MCF 10A (cell line): ENCODE measurements at regions of chr6 and their contacts with region 1.

Region 1: GRCh38 chr6:31068669-31069340 is 43.6 kb downstream of the C6orf15 start:
- DNase-seq: peak; percentile 82
- H3K4me3 Mint-ChIP-seq: no peak overlapping the region
- H3K27ac Mint-ChIP-seq: no peak overlapping the region
- H3K4me1 Mint-ChIP-seq: peaks cover 5% of the 10 kb centered on the region
- H3K27me3 Mint-ChIP-seq: no peaks in the 10 kb centered on the region
- CTCF ChIP-seq: peak; percentile 81

Region 2: GRCh38 chr6:30700340-30700739 is 368.5 kb before region 1 on chr6:
- CTCF ChIA-PET with region 1: no interaction called
- POLR2A ChIA-PET with region 1: no interaction called
- intact Hi-C with region 1: no loop called
- DNase-seq: no peak
- H3K4me3 Mint-ChIP-seq: no peak overlapping the region
- H3K27ac Mint-ChIP-seq: no peak overlapping the region
- H3K4me1 Mint-ChIP-seq: peaks cover 6% of the 10 kb centered on the region
- H3K27me3 Mint-ChIP-seq: no peaks in the 10 kb centered on the region
- CTCF ChIP-seq: no peak

Region 3: DNA sequence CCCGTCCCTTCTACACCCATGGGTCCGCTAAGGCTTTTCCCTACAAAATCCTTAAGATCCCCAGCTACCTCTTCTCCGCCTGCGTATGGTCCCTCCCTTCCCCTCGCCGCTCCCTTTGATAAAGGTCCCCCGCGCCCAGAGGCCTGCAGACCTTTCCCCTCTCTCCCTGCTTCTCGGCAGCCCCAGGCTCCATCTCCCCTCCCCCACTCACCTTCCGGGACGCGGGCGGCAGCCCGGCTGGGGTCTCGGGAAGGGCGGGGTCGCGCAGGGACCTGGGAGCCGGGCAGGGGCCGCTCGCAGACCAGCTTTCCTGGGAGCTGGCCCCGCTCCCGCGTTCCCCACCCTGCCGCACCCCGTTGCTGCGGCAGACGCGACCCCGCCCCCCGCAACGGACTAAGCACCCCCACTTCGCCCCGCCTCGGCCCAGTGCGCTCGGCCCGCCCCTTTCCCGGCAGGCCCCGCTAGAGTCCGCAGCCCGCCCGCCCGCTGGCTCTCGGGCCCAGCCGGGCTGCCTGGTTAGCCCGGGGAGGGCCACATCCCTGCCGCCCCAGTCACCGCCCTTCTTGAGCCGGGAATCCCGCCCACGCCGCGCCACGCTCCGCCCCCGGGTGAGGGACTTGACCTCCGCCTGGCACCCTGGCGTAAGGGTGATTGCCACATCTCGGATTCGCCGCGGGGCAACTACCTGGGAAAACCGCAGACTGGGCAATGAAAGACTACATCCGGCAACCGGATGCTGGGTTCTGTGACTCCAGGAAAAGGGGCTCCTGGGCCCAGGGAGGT is 326.3 kb before region 1 on chr6 and contains the start of gene FLOT1:
- CTCF ChIA-PET with region 1: interaction called, 3 read pairs
- POLR2A ChIA-PET with region 1: no interaction called
- intact Hi-C with region 1: loop called (anchors 5 kb)
- DNase-seq: peak; percentile 99
- H3K4me3 Mint-ChIP-seq: peak within 1 kb of the TSS; percentile 91
- H3K27ac Mint-ChIP-seq: peak within 1 kb of the TSS; percentile 90
- H3K4me1 Mint-ChIP-seq: peaks cover 38% of the 10 kb centered on the region
- H3K27me3 Mint-ChIP-seq: no peaks in the 10 kb centered on the region
- CTCF ChIP-seq: no peak
- total RNA-seq, gene FLOT1: 61.8 and 73.7 TPM in 2 replicates

Region 4: GRCh38 chr6:30926644-30927043 is 142.2 kb before region 1 on chr6:
- CTCF ChIA-PET with region 1: interaction called, 749 read pairs
- POLR2A ChIA-PET with region 1: interaction called, 19 read pairs
- intact Hi-C with region 1: no loop called
- DNase-seq: peak; percentile 36
- H3K4me3 Mint-ChIP-seq: peak overlapping the region; percentile 42
- H3K27ac Mint-ChIP-seq: peak overlapping the region; percentile 95
- H3K4me1 Mint-ChIP-seq: peaks cover 45% of the 10 kb centered on the region
- H3K27me3 Mint-ChIP-seq: no peaks in the 10 kb centered on the region
- CTCF ChIP-seq: no peak

Region 5: GRCh38 chr6:31058128-31058894 is 10.5 kb before region 1 on chr6:
- CTCF ChIA-PET with region 1: interaction called, 20 read pairs
- POLR2A ChIA-PET with region 1: interaction called, 6 read pairs
- intact Hi-C with region 1: no loop called
- DNase-seq: peak; percentile 91
- H3K4me3 Mint-ChIP-seq: peak overlapping the region; percentile 19
- H3K27ac Mint-ChIP-seq: peak overlapping the region; percentile 73
- H3K4me1 Mint-ChIP-seq: peaks cover 37% of the 10 kb centered on the region
- H3K27me3 Mint-ChIP-seq: no peaks in the 10 kb centered on the region
- CTCF ChIP-seq: peak; percentile 41

Region 6: DNA sequence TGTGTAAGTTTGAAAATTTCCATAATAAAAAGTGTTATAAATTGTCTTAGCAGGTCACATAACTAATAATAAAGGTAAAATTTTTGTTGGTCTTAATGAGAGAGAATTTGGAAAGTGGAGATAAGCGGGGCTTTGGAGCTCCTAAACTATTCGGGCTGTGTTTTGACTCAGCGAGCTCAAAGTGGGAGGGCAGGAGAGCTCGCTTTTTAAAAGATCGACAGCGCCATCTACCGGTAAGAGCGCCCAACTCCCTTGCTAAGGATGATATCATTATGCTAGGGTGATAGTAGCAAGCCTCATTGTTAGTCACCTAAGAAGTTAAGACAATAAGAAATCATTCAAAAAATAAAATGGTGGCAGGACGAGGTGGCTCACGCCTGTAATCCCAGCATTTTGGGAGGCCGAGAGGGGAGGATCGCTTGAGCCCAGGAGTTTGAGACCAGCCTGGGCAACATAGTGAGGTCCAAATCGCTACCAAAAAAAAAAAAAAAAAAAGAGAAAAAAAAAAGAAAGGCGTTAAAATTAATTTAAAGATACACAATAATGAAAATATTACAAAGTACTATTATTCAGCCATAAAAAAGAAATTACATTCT is 18.8 kb after region 1 on chr6:
- CTCF ChIA-PET with region 1: interaction called, 24 read pairs
- POLR2A ChIA-PET with region 1: interaction called, 4 read pairs
- intact Hi-C with region 1: no loop called
- DNase-seq: peak; percentile 91
- H3K4me3 Mint-ChIP-seq: no peak overlapping the region
- H3K27ac Mint-ChIP-seq: peak overlapping the region; percentile 16
- H3K4me1 Mint-ChIP-seq: peaks cover 21% of the 10 kb centered on the region
- H3K27me3 Mint-ChIP-seq: no peaks in the 10 kb centered on the region
- CTCF ChIP-seq: peak; percentile 65